ENCODE measurements at regions of chr17 and their contacts with region 1.

Region 1: GRCh38 chr17:76103274-76104139 is at the start of gene EXOC7:
- DNase-seq: peak; percentile 95
- ATAC-seq: peak; percentile 97
- H3K4me3 Mint-ChIP-seq: peak within 1 kb of the TSS; percentile 98
- H3K27ac Mint-ChIP-seq: peak within 1 kb of the TSS; percentile 91
- H3K4me1 Mint-ChIP-seq: peaks cover 20% of the 10 kb centered on the region
- H3K27me3 Mint-ChIP-seq: no peaks in the 10 kb centered on the region
- CTCF ChIP-seq: no peak
- total RNA-seq, gene EXOC7: 133 and 146 TPM in 2 replicates

Region 2: DNA sequence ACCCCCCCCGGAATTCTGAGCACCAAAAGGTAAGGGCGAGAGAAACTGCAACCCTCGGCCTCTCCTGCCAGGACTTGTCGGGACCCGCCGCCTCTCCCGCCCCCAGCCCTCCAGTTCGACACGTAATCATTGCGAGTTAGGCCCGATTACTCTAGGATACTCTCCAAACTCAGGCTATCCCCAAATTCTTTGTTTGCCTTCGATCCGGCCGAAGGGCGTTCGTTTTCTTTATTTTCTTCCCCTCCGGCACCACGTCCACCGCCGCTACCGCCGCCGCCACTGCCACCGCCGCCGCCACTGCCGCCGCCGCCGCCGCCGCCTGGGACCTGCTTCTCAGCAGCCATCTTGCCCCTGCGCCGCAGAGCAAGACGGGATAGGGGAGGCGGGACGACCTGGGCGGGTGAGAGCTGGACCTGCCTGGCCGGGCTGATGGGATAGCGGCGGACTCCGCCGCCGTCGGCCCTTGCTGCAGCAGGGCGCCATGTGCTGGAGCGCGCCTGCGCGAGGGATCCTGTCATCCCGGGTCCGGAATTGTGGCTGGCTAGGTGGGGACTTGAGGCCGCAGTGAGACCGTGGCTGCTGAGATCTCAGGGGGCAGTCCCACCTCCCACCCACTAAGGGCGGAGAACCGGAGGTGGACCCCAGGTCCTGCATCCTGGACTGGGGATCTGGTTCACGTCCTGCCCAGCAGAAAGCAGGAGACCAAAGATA is 31.2 kb before region 1 on chr17 and contains the start of gene SRP68:
- CTCF ChIA-PET with region 1: no interaction called
- POLR2A ChIA-PET with region 1: interaction called, 9 read pairs
- intact Hi-C with region 1: loop called (anchors 1 kb)
- DNase-seq: peak; percentile 79
- ATAC-seq: peak; percentile 92
- H3K4me3 Mint-ChIP-seq: peak within 1 kb of the TSS; percentile 94
- H3K27ac Mint-ChIP-seq: peak within 1 kb of the TSS; percentile 90
- H3K4me1 Mint-ChIP-seq: peaks cover 45% of the 10 kb centered on the region
- H3K27me3 Mint-ChIP-seq: peaks cover 26% of the 10 kb centered on the region
- CTCF ChIP-seq: no peak
- total RNA-seq, gene SRP68: 73.7 and 76.1 TPM in 2 replicates

Measured in activated B cell treated with CpG ODN at 0.5 μM for 24 hours (primary cell).